ENCODE measurements at regions of chr13 and their contacts with region 1.

Region 1: DNA sequence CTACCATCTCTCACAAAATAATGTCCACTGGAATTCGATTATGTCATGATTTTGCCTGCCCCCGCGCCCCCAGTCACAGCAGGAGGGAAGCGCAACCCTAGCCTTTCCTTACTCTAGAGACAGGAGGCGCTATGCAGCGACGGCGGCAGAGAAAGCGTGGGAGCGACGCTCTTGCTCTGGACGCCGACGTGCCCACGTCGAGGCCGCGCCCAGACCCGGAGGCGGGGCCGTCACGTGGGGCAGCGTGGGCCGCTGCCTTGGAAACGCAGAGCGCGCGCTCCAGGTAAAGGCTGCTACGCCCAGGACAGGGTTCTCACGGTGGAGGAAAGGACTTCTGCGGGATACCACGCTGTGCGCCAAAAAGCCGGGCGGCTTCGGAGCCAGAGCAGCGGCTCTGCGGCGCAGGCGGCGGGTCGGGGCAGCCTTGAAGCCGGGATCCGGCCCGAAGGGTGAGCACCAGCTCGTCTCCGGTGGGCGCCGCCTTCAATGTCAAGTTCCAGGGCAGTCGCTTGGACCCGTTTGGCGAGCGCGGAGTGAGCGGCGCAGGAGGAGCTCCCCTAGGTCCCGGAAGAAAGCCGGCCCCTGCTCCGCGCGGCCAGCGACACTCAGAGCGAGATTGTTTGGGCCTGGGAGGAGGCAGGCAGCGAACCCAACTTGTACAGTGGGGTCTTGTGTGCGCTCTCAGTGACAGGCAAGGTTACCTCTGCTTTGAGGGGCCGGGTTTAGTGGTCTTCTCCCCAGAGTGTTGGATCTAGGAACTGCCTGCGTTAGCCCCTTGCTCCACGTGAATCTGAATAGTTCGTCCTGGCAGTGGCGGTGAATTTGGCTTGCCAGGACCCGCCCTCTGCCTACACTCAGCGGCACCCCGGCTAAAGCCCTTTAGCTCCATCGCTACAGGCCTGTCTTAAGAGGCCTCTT is 121.7 kb downstream of the MRPL57 start:
- DNase-seq: peak; percentile 84 to 86 (median 85)
- H3K4me3 ChIP-seq: peak overlapping the region; percentile 55 to 77
- H3K4me3 Mint-ChIP-seq: peak overlapping the region; percentile 80 to 90 (median 83)
- H3K27ac ChIP-seq: peak overlapping the region; percentile 59
- H3K27ac Mint-ChIP-seq: peak overlapping the region; percentile 38 to 89 (median 82)
- H3K4me1 ChIP-seq: peaks cover 24% of the 10 kb centered on the region
- H3K4me1 Mint-ChIP-seq: peaks cover 10 to 25% (median 18%) of the 10 kb centered on the region in 4 donors
- H3K27me3 ChIP-seq: no peaks in the 10 kb centered on the region
- H3K27me3 Mint-ChIP-seq: no peaks in the 10 kb centered on the region

Region 2: GRCh38 chr13:20566898-20567874 is 731.0 kb before region 1 on chr13 and contains the start of gene IFT88:
- CTCF ChIA-PET with region 1: no interaction called
- POLR2A ChIA-PET with region 1: no interaction called
- intact Hi-C with region 1: loop called (anchors 2 kb)
- DNase-seq: peak; percentile 78 to 86 (median 80)
- H3K4me3 ChIP-seq: peak within 1 kb of the TSS; percentile 56 to 61
- H3K4me3 Mint-ChIP-seq: peak within 1 kb of the TSS; percentile 92 to 95 (median 94)
- H3K27ac ChIP-seq: peak within 1 kb of the TSS; percentile 53
- H3K27ac Mint-ChIP-seq: peak within 1 kb of the TSS; percentile 92 to 96 (median 92)
- H3K4me1 ChIP-seq: peaks cover 16% of the 10 kb centered on the region
- H3K4me1 Mint-ChIP-seq: peaks cover 10 to 19% (median 14%) of the 10 kb centered on the region in 4 donors
- H3K27me3 ChIP-seq: no peaks in the 10 kb centered on the region
- H3K27me3 Mint-ChIP-seq: no peaks in the 10 kb centered on the region
- total RNA-seq, gene IFT88: 8.3 to 9.8 TPM

Region 3: DNA sequence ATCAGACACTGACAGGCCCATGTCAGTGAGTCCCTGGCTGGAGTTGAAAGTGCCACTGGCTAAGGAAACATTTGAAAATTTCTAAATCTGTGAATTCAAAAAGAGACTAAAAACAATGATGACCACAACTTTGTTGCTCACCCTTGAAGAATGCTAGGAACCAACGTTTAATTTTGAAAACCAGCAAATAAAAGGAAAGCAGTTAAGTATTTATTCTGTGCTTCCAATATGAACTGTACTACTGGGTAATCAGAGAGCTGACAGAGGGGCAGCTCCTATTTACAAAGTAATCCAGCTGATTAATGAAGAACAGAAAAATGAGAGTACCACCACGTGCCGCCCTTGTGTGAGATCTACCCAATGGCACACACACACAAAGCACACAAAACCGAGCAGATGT is 192.1 kb before region 1 on chr13:
- CTCF ChIA-PET with region 1: interaction called, 3 read pairs
- POLR2A ChIA-PET with region 1: no interaction called
- intact Hi-C with region 1: loop called (anchors 1 kb)
- DNase-seq: no peak
- H3K4me3 ChIP-seq: no peak overlapping the region
- H3K4me3 Mint-ChIP-seq: no peak overlapping the region
- H3K27ac ChIP-seq: no peak overlapping the region
- H3K27ac Mint-ChIP-seq: no peak overlapping the region
- H3K4me1 ChIP-seq: peaks cover 3% of the 10 kb centered on the region
- H3K4me1 Mint-ChIP-seq: peaks cover 0 to 5% (median 2%) of the 10 kb centered on the region in 4 donors
- H3K27me3 ChIP-seq: no peaks in the 10 kb centered on the region
- H3K27me3 Mint-ChIP-seq: peaks cover 0 to 1% of the 10 kb centered on the region in 2 donors

Region 4: DNA sequence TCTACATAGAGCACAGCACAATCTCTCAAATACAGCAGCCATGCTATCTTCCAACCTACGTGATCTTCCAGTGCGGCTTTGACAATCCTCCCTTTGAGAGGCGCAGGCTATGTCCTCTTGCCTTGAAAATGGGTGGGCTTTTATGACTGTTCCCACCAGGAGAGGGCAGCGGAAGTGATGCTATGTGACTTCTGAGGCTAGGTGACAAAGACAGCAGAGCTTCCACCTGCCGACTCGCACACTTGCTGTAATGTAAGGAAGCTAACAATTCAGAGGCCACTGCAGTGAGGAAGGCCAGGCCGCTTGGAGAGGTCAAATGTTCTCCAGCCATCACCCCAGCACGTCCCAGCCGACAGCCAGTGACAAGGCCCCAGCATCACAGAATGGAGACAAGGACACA is 55.9 kb before region 1 on chr13:
- CTCF ChIA-PET with region 1: no interaction called
- POLR2A ChIA-PET with region 1: no interaction called
- intact Hi-C with region 1: no loop called
- DNase-seq: no peak
- H3K4me3 ChIP-seq: no peak overlapping the region
- H3K4me3 Mint-ChIP-seq: no peak overlapping the region
- H3K27ac ChIP-seq: no peak overlapping the region
- H3K27ac Mint-ChIP-seq: no peak overlapping the region
- H3K4me1 ChIP-seq: no peaks in the 10 kb centered on the region
- H3K4me1 Mint-ChIP-seq: peaks cover 0 to 6% (median 2%) of the 10 kb centered on the region in 4 donors
- H3K27me3 ChIP-seq: no peaks in the 10 kb centered on the region
- H3K27me3 Mint-ChIP-seq: peaks cover 3 to 10% of the 10 kb centered on the region in 2 donors

Region 5: DNA sequence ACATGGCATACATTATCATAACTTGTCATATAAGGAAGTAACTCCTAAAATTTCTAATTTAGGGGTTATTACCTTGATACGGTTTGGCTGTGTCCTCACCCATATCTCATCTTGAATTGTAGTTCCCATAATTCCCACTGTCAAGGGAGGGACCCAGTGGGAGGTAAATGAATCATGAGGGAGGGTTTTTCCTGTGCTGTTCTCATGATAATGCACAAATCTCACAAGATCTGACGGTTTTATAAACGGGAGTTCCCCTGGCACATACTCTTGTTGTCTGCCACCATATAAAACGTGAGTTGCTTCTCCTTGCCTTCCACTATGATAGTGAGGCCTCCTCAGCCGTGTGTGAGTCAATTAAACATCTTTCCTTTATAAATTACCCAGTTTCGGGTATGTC is 84.9 kb after region 1 on chr13:
- CTCF ChIA-PET with region 1: interaction called, 11 read pairs
- POLR2A ChIA-PET with region 1: no interaction called
- intact Hi-C with region 1: no loop called
- DNase-seq: no peak
- H3K4me3 ChIP-seq: no peak overlapping the region
- H3K4me3 Mint-ChIP-seq: no peak overlapping the region
- H3K27ac ChIP-seq: no peak overlapping the region
- H3K27ac Mint-ChIP-seq: peak overlapping the region in 1 of 7 donors; percentile 36
- H3K4me1 ChIP-seq: no peaks in the 10 kb centered on the region
- H3K4me1 Mint-ChIP-seq: peaks cover 0 to 3% (median 0%) of the 10 kb centered on the region in 4 donors
- H3K27me3 ChIP-seq: no peaks in the 10 kb centered on the region
- H3K27me3 Mint-ChIP-seq: no peaks in the 10 kb centered on the region

Region 6: DNA sequence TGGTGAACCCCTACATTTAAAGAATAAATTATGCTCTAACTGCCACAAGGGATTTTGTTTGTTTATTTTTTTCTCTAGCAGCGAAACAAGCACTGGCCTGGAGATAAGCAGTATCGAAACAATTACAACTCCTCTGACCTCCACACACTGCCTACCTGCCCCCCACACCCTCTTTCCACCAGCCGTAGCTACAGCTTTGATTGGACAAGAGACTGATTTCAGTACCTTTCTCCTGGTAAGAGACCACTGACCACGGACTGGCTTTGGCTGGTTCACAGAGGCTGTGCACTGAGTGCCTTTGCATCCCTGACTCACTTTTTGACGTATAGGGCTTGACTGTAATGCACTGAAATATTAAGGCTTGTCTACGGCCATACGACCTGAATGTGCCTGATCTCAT is 168.4 kb after region 1 on chr13:
- CTCF ChIA-PET with region 1: interaction called, 235 read pairs
- POLR2A ChIA-PET with region 1: interaction called, 3 read pairs
- intact Hi-C with region 1: no loop called
- DNase-seq: no peak
- H3K4me3 ChIP-seq: no peak overlapping the region
- H3K4me3 Mint-ChIP-seq: no peak overlapping the region
- H3K27ac ChIP-seq: no peak overlapping the region
- H3K27ac Mint-ChIP-seq: no peak overlapping the region
- H3K4me1 ChIP-seq: no peaks in the 10 kb centered on the region
- H3K4me1 Mint-ChIP-seq: no peaks in the 10 kb centered on the region
- H3K27me3 ChIP-seq: no peaks in the 10 kb centered on the region
- H3K27me3 Mint-ChIP-seq: peaks cover 0 to 1% of the 10 kb centered on the region in 2 donors

Region 7: GRCh38 chr13:21603531-21604448 is 305.6 kb after region 1 on chr13 and contains the start of gene MICU2:
- CTCF ChIA-PET with region 1: interaction called, 3 read pairs
- POLR2A ChIA-PET with region 1: interaction called, 4 read pairs
- intact Hi-C with region 1: loop called (anchors 1 kb)
- DNase-seq: peak; percentile 96 to 97 (median 97)
- H3K4me3 ChIP-seq: peak within 1 kb of the TSS; percentile 78 to 83
- H3K4me3 Mint-ChIP-seq: peak within 1 kb of the TSS; percentile 86 to 97 (median 89)
- H3K27ac ChIP-seq: peak within 1 kb of the TSS; percentile 85
- H3K27ac Mint-ChIP-seq: peak within 1 kb of the TSS; percentile 90 to 97 (median 95)
- H3K4me1 ChIP-seq: peaks cover 36% of the 10 kb centered on the region
- H3K4me1 Mint-ChIP-seq: peaks cover 28 to 58% (median 36%) of the 10 kb centered on the region in 4 donors
- H3K27me3 ChIP-seq: no peaks in the 10 kb centered on the region
- H3K27me3 Mint-ChIP-seq: peaks cover 4% of the 10 kb centered on the region in 2 donors
- total RNA-seq, gene MICU2: 46.0 to 50.3 TPM

Region 8: GRCh38 chr13:21717817-21718216 is 419.6 kb after region 1 on chr13:
- CTCF ChIA-PET with region 1: no interaction called
- POLR2A ChIA-PET with region 1: no interaction called
- intact Hi-C with region 1: no loop called
- DNase-seq: no peak
- H3K4me3 ChIP-seq: no peak overlapping the region
- H3K4me3 Mint-ChIP-seq: no peak overlapping the region
- H3K27ac ChIP-seq: no peak overlapping the region
- H3K27ac Mint-ChIP-seq: no peak overlapping the region
- H3K4me1 ChIP-seq: no peaks in the 10 kb centered on the region
- H3K4me1 Mint-ChIP-seq: no peaks in the 10 kb centered on the region
- H3K27me3 ChIP-seq: no peaks in the 10 kb centered on the region
- H3K27me3 Mint-ChIP-seq: peaks cover 6 to 22% of the 10 kb centered on the region in 2 donors

Measured in CD4-positive, alpha-beta memory T cell (primary cell).